GM13976 (cell line): ENCODE measurements at regions of chr6 and their contacts with region 1.

Region 1: DNA sequence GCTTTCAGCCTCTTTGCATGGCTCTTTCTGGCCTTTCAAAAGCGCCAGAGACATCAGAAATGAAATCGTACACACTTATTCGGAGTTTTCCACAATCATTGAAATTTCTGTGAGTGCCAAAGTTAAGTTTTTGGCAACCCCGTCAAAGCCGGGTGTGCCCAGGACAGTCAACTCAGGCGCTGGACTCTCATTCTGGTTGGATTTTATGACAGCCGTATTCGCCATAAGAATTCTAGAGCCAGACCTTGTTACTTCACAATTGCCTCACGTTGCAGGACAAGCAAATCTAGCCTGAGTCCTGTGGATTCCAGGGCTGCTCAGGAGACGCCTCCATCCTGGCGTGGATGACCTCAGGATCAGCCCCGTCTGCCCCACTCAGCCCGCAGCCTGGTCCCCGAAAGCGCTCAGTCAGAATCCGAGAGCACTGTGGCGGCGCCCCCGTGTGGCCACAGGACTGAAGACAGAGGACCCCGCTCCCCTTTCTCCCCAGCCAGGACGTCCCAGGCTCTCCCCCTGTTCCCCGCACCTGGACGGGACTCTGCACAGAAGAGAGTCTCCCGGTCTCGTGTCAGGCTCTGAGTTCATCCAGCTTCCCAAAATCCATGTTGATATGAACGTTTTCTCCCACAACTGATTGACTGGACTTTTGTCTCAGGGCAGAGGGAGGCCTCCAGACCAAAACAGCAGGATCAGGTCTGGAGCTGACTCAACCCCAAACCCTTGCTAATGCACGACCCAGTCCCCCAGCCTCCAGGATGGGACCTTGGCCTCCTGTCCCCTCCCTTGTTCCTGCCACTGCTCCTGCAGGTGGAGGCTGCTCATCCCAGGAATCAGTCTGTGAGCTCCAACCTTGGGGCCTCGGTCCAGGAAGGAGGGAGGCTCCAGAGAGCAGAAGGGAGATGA is 38.2 kb downstream of the MICA start:
- DNase-seq: peak; percentile 87
- CTCF ChIP-seq: peak; percentile 70

Region 2: GRCh38 chr6:31399589-31400466 is 41.8 kb before region 1 on chr6:
- in situ Hi-C with region 1: loop called (anchors 5 kb)
- DNase-seq: peak; percentile 75
- CTCF ChIP-seq: peak; percentile 86